ENCODE measurements at regions of chr10 and their contacts with region 1.

Region 1: DNA sequence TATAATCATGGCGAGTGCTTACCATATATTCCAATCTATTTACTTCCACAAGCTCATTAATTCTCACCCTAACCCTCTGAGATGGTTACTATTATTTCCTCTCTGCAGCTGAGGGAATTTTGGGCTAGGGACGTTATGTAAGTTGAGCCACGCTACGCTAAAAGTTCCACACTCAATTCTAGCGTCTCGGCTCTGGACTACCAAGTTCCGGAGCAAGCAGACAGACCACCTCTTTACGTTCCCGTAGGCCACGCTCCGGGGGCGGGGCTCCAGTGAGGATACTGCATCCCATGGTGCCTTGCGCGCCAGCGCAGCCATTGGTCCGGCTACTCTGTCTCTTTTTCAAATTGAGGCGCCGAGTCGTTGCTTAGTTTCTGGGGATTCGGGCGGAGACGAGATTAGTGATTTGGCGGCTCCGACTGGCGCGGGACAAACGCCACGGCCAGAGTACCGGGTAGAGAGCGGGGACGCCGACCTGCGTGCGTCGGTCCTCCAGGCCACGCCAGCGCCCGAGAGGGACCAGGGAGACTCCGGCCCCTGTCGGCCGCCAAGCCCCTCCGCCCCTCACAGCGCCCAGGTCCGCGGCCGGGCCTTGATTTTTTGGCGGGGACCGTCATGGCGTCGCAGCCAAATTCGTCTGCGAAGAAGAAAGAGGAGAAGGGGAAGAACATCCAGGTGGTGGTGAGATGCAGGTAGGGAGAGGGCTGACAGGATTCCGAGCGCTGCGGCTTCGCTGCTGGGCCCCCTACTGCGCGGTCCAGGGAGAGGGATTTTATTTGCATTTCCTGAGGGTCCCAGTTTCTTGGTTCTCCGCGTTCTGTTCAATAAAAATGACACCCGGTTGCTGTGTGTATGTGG is at the start of gene KIF11:
- DNase-seq: peak; percentile 99
- H3K4me3 Mint-ChIP-seq: peak within 1 kb of the TSS; percentile 95
- H3K27ac Mint-ChIP-seq: peak within 1 kb of the TSS; percentile 99
- H3K4me1 Mint-ChIP-seq: peaks cover 23% of the 10 kb centered on the region
- H3K27me3 Mint-ChIP-seq: no peaks in the 10 kb centered on the region
- total RNA-seq, gene KIF11: 43.2 to 43.4 TPM

Region 2: GRCh38 chr10:91220194-91220953 is 1372.6 kb before region 1 on chr10 and contains the start of gene PCGF5:
- CTCF ChIA-PET with region 1: no interaction called
- intact Hi-C with region 1: loop called (anchors 5 kb)
- DNase-seq: peak; percentile 89
- H3K4me3 Mint-ChIP-seq: peak within 1 kb of the TSS; percentile 80
- H3K27ac Mint-ChIP-seq: peak within 1 kb of the TSS; percentile 22
- H3K4me1 Mint-ChIP-seq: peaks cover 33% of the 10 kb centered on the region
- H3K27me3 Mint-ChIP-seq: no peaks in the 10 kb centered on the region
- total RNA-seq, gene PCGF5: 34.2 to 36.4 TPM

Region 3: GRCh38 chr10:92103376-92104090 is 489.5 kb before region 1 on chr10:
- CTCF ChIA-PET with region 1: no interaction called
- intact Hi-C with region 1: loop called (anchors 5 kb)
- DNase-seq: no peak
- H3K4me3 Mint-ChIP-seq: no peak overlapping the region
- H3K27ac Mint-ChIP-seq: no peak overlapping the region
- H3K4me1 Mint-ChIP-seq: peaks cover 6% of the 10 kb centered on the region
- H3K27me3 Mint-ChIP-seq: no peaks in the 10 kb centered on the region

Region 4: DNA sequence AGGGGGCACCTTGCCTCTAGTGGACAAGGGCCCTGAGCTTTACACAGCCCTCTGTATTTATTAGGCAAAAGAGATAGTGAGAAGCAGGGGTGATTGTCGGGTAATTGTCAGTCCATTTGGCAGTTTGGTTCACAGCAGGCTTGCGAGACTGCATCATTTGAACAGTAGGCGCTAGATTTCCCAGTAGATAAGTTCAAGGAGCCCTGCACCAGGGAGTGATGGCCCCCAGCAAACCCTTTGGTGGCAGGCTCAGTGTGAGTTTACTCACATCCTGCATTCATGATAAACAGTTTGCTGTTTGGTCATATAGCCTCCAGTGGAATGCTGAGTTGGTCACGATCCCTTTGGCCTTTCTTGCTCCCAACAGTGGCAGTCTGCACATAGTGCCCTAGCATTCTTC is 242.6 kb before region 1 on chr10:
- CTCF ChIA-PET with region 1: no interaction called
- intact Hi-C with region 1: no loop called
- DNase-seq: no peak
- H3K4me3 Mint-ChIP-seq: no peak overlapping the region
- H3K27ac Mint-ChIP-seq: no peak overlapping the region
- H3K4me1 Mint-ChIP-seq: no peaks in the 10 kb centered on the region
- H3K27me3 Mint-ChIP-seq: no peaks in the 10 kb centered on the region

Region 5: GRCh38 chr10:92573798-92574547 is 19.0 kb before region 1 on chr10 and contains the start of gene IDE:
- CTCF ChIA-PET with region 1: interaction called, 12 read pairs
- intact Hi-C with region 1: loop called (anchors 1 kb)
- DNase-seq: peak; percentile 88
- H3K4me3 Mint-ChIP-seq: peak within 1 kb of the TSS; percentile 81
- H3K27ac Mint-ChIP-seq: peak within 1 kb of the TSS; percentile 85
- H3K4me1 Mint-ChIP-seq: peaks cover 34% of the 10 kb centered on the region
- H3K27me3 Mint-ChIP-seq: no peaks in the 10 kb centered on the region
- total RNA-seq, gene IDE: 30.8 to 31.2 TPM

Region 6: DNA sequence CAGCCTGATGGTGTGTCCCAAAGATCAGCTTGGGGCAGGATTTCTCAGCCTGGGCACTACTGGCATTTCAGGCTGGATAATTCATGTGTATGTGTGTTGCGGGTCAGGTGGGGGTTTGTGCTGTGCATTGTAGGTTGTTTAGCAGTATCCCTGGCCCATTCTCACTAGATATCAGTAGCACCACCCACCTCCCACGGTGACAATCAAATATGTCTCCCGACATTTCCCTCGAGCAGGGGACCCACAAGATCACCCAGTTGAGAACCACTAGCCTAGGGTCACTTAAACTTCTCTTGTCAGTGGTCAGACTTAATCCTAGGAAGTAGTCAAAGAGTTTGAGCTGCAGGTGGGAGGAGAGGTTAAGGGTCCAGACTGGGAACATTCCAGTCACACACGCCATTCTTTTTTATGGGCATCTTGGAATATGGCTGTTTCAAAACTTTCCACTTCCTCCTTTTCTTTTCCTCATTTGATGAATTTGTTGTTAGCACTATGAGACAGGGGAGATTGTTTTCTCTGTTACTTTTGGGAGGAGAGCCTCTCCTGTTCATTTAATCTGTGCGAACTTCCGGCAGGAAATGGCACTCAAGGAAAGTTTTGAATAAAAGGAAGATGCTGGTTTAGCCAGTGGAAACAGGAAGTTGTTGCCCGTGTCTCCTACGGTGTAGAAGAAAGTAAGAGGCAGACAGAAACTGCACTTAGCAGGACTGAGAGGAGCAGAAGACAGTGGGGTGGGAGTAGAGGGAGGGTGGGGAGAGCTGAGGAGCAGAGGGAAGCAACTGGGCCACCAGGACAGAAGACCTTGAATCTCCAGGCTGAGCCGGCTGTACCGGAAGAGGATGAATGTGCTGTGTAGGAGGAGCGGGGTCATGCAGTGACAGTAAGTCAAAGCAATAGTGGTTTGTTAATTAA is 237.7 kb after region 1 on chr10:
- CTCF ChIA-PET with region 1: no interaction called
- intact Hi-C with region 1: loop called (anchors 5 kb)
- DNase-seq: peak; percentile 54
- H3K4me3 Mint-ChIP-seq: peak overlapping the region; percentile 73
- H3K27ac Mint-ChIP-seq: peak overlapping the region; percentile 86
- H3K4me1 Mint-ChIP-seq: peaks cover 15% of the 10 kb centered on the region
- H3K27me3 Mint-ChIP-seq: no peaks in the 10 kb centered on the region

Region 7: GRCh38 chr10:93702211-93703001 is 1109.4 kb after region 1 on chr10 and contains the start of gene FRA10AC1:
- CTCF ChIA-PET with region 1: no interaction called
- intact Hi-C with region 1: loop called (anchors 5 kb)
- DNase-seq: peak; percentile 91
- H3K4me3 Mint-ChIP-seq: no peak within 1 kb of the TSS
- H3K27ac Mint-ChIP-seq: no peak within 1 kb of the TSS
- H3K4me1 Mint-ChIP-seq: peaks cover 15% of the 10 kb centered on the region
- H3K27me3 Mint-ChIP-seq: no peaks in the 10 kb centered on the region
- total RNA-seq, gene FRA10AC1: 24.5 to 25.0 TPM